ENCODE measurements at regions of chr9 and their contacts with region 1.

Region 1: GRCh38 chr9:33800886-33801285 is 5.5 kb downstream of the PRSS3 start:
- DNase-seq: no peak
- H3K4me3 ChIP-seq: no peak overlapping the region
- H3K27ac ChIP-seq: no peak overlapping the region
- H3K4me1 ChIP-seq: no peaks in the 10 kb centered on the region
- H3K27me3 ChIP-seq: no peaks in the 10 kb centered on the region
- CTCF ChIP-seq: no peak

Region 2: GRCh38 chr9:33446946-33447798 is 353.7 kb before region 1 on chr9 and contains the start of gene AQP3:
- CTCF ChIA-PET with region 1: no interaction called
- dilution Hi-C with region 1: no loop called
- in situ Hi-C with region 1: no loop called
- intact Hi-C with region 1: no loop called
- DNase-seq: peak; percentile 58
- H3K4me3 ChIP-seq: peak within 1 kb of the TSS; percentile 1 to 64 (median 35)
- H3K27ac ChIP-seq: no peak within 1 kb of the TSS
- H3K4me1 ChIP-seq: peaks cover 39% of the 10 kb centered on the region
- H3K27me3 ChIP-seq: no peaks in the 10 kb centered on the region
- CTCF ChIP-seq: peak in 1 of 2 donors; percentile 48
- total RNA-seq, gene AQP3: 11.0 to 20.0 TPM

Region 3: GRCh38 chr9:33903157-33903780 is 102.4 kb after region 1 on chr9:
- CTCF ChIA-PET with region 1: no interaction called
- dilution Hi-C with region 1: loop called (anchors 5 kb)
- in situ Hi-C with region 1: no loop called
- intact Hi-C with region 1: no loop called
- DNase-seq: no peak
- H3K4me3 ChIP-seq: no peak overlapping the region
- H3K27ac ChIP-seq: no peak overlapping the region
- H3K4me1 ChIP-seq: no peaks in the 10 kb centered on the region
- H3K27me3 ChIP-seq: no peaks in the 10 kb centered on the region
- CTCF ChIP-seq: no peak